ENCODE measurements at regions of chr1 and their contacts with region 1.

Region 1: GRCh38 chr1:58783993-58784757 is at the start of gene JUN:
- DNase-seq: peak; percentile 99
- ATAC-seq: peak; percentile 91
- total RNA-seq, gene JUN: 64.2 TPM

Region 2: DNA sequence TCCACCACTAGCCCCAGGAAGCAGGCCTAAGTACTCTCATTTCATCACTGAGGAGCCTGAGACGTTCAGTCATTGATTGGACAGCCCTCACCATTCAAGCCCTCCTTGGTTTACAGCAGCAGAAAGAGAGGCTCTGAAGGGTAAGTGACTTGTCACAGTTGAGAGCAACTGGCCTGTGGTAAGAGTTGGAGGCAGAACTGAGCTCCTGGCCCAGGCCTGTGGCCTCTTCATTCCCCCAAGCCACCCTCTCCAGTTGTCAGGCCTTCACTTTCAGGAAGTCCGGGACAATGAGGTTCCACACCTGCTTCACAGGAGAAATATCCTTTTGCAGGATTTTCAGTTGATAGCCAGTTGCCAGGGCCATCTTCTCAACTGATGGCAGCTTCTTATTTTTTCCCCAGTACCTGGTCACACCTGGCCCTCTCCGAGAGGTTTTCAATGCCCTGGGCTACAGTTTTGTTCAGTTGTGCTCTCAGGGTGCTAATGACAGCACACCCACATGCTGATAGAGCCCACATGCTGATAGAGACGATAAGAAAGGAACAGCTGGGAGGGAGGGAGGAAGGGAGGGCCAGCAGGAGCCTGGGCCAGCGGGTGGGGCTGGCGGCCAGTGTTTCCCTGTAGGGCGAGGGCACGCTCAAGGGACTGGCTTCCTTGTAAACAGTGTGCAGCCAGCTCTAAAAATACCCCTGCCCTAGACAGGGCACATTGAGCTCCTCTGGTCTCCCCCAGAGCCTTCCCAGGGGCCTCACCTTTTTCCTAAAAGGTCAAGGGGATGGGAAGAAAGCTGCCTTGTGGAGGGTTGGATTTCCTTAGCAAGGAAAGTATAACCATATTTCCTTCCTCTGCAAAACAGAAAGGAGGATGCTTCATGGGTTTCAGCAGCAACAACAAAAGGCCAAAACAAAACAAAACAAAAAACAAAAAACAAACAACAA is 112.3 kb after region 1 on chr1:
- intact Hi-C with region 1: loop called (anchors 2 kb)
- DNase-seq: peak; percentile 83
- ATAC-seq: peak; percentile 81

Region 3: DNA sequence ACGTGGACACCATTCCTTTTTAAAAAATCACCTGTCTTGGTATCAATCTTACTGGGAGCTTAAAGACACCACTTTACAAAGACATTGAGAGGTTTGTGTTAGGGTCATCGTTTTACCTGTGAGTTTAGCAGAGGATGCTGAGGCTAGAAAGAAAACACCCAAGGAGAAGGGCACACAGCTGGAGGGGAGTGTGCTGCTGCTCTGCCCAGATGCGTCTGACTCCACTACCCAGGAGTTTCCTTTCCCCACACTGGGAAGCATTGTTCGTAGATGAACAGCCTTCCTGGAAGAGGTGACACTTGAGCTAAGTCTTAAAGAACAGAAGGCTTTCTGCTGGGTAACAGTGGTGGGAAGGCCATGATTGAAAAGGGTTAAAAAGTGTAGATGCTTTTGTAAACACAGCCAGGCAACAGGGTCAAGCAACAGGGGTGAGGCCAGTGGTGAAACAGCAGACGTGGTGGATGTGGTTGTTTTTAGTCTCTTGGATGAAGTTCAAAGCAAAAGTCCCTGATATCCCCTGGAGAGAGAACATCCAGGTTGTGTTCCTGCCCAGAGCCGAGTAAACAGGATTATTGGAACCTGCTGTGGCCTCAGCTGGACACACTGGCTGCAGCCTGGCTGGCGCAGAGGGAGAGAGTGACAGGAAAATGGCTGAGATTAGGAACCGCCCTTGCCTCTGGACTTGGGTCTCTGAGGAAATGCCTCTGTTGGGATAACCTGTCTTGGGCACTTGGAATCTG is 198.3 kb after region 1 on chr1:
- intact Hi-C with region 1: loop called (anchors 2 kb)
- DNase-seq: peak; percentile 70
- ATAC-seq: peak; percentile 87

Region 4: GRCh38 chr1:59107516-59107915 is 323.3 kb after region 1 on chr1:
- intact Hi-C with region 1: loop called (anchors 1 kb)
- DNase-seq: peak; percentile 73
- ATAC-seq: peak; percentile 94

Region 5: DNA sequence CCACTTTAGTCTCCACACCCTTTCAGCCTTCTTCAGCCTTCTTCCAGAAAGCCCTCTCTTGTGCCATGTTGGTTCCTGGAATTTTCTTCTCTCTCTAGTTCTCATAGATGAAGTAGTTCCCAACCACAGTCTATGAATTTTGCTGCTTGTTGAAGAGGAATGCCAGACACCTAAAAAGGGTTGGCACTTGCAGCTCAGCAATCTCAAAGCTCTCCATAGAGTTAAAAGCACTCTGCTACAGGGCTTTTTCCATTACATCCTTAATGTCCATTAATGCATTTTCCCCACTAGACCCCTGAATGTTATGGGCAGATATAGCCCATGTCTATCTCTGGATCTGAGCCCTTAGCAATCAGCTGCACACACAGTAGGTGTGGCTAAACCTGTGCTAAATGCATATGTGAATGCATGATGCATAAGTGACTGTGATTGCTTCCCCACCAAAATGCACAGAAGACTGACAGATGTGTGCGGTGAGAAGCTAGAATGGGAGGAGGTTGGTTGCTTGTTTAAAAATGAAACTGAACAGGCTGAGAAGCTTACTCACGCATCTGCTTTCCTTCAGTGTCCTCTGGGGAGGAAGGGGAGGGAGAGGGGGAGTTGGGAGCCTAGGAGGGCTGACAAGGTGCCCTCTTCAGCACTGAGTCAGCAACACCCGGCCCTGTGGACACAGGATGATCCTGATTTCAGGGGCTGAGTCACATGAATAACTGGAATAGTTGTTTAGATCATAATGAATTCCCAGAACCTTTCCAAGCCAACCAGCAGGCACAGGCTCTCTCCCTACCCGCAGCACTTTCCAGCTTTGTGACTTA is 366.6 kb after region 1 on chr1:
- intact Hi-C with region 1: loop called (anchors 1 kb)
- DNase-seq: peak; percentile 81
- ATAC-seq: peak; percentile 95

Region 6: DNA sequence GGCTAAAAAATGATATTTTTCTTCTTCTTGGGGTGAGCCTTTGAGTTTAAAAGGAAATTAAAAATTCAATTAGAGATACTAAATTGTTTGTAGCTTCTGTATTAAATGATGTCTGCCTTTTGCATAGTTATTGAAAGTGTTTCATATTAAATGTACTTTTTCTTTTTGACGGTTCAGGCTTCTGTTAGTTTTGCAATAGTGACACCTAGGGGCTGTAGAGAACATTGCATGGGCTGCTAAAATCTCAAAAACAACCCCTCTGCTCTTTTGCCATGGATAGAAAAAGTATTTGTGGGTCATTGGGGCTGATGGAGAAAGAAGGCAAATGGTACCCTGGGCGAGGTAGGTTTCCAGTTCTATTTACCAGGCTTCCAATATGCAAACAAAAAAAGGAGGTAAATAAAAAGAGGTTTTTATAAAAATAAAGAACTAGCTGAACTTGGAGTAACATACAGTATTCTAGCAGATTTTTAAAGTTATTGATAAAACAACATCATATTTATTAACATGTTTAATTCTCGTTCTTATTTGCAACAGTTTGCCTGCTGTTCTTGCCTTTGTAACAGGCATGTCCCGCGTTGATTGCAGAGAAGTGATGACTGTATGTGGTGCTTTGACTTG is 915.2 kb after region 1 on chr1:
- intact Hi-C with region 1: loop called (anchors 2 kb)
- DNase-seq: no peak
- ATAC-seq: no peak